ENCODE measurements at regions of chr1 and their contacts with region 1.

Region 1: DNA sequence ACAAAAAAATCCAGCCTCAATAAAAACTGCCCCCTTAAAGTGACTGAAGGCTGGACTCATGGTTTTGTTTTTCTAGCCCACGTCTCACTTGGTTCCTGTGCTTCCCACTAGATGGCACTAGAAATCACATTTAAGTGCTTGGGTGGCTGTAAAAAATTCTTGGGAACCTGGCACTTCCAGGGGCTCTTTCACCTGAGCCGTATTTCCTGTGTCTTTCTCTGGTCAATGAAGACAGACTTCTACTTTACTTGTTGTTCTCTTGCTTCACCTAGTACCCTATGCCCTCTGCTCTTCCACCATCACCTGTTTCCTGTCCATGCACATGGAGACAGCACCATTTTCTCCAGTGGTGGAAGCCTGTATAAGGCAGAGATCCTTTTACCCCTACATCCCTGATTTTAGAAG is 20.0 kb downstream of the METTL13 start:
- DNase-seq: no peak
- ATAC-seq: peak in 3 of 4 donors; percentile 33 to 46 (median 44)
- H3K4me3 ChIP-seq: no peak overlapping the region
- H3K27ac ChIP-seq: no peak overlapping the region
- H3K4me1 ChIP-seq: peaks cover 0 to 40% (median 10%) of the 10 kb centered on the region in 12 donors
- H3K27me3 ChIP-seq: no peaks in the 10 kb centered on the region
- CTCF ChIP-seq: peak; percentile 57 to 84 (median 78)
- POLR2A ChIP-seq: no peak

Region 2: DNA sequence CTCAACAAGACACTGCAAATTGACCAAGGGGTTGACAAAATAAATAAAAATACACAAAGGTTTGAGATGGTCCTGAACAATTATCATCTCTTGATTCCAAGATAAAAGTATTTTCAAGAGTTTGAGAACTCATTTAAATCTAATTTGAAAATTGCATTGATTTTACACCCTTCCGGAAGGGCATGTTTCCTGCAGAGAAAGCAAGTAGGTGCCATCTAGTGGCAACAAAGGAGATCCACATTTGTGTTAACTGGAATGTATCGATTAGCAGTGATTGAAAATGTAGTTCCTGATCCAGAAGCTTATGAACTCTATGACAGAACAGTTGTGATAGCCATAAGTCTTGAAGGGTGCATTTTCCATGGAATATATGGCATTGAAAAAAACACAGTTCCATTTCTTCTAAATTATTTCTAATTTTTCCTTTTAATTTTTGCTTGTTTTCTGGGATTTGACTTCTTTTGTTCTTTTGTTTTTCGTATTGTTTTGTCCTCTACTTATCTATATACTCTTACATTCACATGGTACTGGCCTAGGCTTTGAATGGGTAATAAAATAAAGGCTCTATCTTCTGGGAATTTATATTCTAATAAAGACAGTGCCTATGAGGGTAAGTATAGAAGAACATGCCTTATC is 183.5 kb after region 1 on chr1:
- intact Hi-C with region 1: loop called (anchors 1 to 2 kb)
- DNase-seq: no peak
- ATAC-seq: peak in 1 of 4 donors; percentile 69
- H3K4me3 ChIP-seq: no peak overlapping the region
- H3K27ac ChIP-seq: no peak overlapping the region
- H3K4me1 ChIP-seq: peaks cover 0 to 8% (median 5%) of the 10 kb centered on the region in 12 donors
- H3K27me3 ChIP-seq: no peaks in the 10 kb centered on the region
- CTCF ChIP-seq: peak; percentile 63 to 88 (median 80)
- POLR2A ChIP-seq: no peak